HepG2 (cell line): ENCODE measurements at regions of chr10 and their contacts with region 1.

Region 1: DNA sequence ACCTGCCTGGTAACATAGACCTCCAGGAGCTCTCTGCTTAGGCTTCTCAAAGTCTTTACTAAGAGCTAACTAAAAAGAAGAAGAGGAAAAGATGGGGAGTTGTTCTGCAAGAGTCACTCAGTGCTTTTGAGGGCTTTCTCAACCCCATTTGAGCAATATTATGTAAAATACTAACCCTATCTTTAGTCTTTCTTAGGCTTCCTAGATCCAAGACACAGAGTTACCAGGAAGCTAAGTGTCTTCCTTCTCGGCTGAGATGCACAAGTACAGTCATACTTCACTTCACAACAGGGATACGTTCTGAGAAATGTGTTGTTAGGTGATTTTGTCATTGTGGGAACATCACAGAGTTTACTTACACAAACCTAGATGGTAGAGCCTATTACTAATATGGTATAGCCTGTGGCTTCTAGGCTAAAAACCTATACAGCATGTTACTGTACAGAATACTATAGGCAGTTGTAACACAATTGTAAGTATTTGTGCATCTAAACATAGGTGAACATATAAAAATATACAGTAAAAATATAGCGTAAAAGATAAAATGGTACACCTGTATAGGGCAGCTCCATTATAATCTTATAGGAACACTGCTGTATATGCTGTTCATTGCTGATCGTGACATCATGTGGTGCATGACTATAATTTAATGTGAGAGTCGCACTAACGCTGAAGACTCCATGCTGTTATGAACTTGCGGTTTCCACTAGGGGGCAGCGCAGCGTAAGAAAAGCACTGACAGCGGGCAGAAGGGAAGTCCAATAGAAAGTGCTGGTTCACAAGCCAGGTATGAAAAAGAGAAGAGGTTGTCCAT is 16.3 kb downstream of the ANKRD22 start:
- DNase-seq: peak; percentile 68
- ATAC-seq: peak; percentile 99
- H3K4me3 ChIP-seq: no peak overlapping the region
- H3K27ac ChIP-seq: no peak overlapping the region
- H3K4me1 ChIP-seq: no peaks in the 10 kb centered on the region
- H3K27me3 ChIP-seq: no peaks in the 10 kb centered on the region
- CTCF ChIP-seq: peak; percentile 90
- EP300 ChIP-seq: no peak
- POLR2A ChIP-seq: no peak
- RAD21 ChIP-seq: no peak; the same call in 1 of the 2 replicates

Region 2: DNA sequence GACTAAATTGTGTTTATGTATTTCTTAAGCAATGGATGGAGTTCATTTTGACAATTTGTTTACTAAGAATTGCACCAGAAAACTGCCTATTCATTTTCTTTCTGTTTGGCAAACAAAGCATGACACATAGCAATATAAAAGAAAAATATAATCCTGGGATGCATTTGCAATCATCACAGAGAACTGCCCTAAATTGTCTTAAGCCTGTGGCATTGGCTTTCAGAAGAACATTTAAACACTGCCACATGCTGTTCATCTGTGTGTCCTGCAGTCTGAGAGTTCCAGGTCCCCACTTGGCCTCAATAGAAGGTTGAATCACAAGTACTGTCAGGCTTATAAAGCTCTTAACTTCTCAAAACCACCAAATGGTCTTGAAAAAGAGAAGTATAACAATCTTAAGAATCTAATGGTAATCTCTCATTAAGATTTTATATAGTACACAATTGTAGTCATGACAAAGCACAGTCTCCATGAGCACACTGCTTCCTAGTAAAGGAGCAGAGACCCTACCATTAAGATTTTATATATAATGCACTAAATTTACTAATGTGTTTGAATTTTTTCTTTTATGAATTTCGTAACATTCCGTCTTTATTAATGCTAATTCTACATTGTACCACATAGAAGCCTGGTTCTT is 282.1 kb before region 1 on chr10:
- CTCF ChIA-PET with region 1: no interaction called
- POLR2A ChIA-PET with region 1: no interaction called
- in situ Hi-C with region 1: no loop called
- intact Hi-C with region 1: no loop called
- DNase-seq: peak; percentile 21
- ATAC-seq: peak; percentile 92
- H3K4me3 ChIP-seq: no peak overlapping the region
- H3K27ac ChIP-seq: no peak overlapping the region
- H3K4me1 ChIP-seq: no peaks in the 10 kb centered on the region
- H3K27me3 ChIP-seq: no peaks in the 10 kb centered on the region
- CTCF ChIP-seq: peak; percentile 75
- EP300 ChIP-seq: no peak
- POLR2A ChIP-seq: no peak
- RAD21 ChIP-seq: no peak

Region 3: GRCh38 chr10:88565072-88565471 is 270.2 kb before region 1 on chr10:
- CTCF ChIA-PET with region 1: no interaction called
- POLR2A ChIA-PET with region 1: no interaction called
- in situ Hi-C with region 1: no loop called
- intact Hi-C with region 1: no loop called
- DNase-seq: no peak
- ATAC-seq: 0 out of 3 replicates have a peak, but pooled peaks have one; percentile 51
- H3K4me3 ChIP-seq: no peak overlapping the region
- H3K27ac ChIP-seq: no peak overlapping the region
- H3K4me1 ChIP-seq: no peaks in the 10 kb centered on the region
- H3K27me3 ChIP-seq: no peaks in the 10 kb centered on the region; a peak in 1 of 5 replicates
- CTCF ChIP-seq: no peak
- EP300 ChIP-seq: no peak
- POLR2A ChIP-seq: no peak
- RAD21 ChIP-seq: no peak

Region 4: GRCh38 chr10:88791924-88792323 is 43.4 kb before region 1 on chr10:
- CTCF ChIA-PET with region 1: no interaction called
- POLR2A ChIA-PET with region 1: no interaction called
- in situ Hi-C with region 1: no loop called
- intact Hi-C with region 1: no loop called
- DNase-seq: peak; percentile 8
- ATAC-seq: peak; percentile 79
- H3K4me3 ChIP-seq: no peak overlapping the region
- H3K27ac ChIP-seq: no peak overlapping the region
- H3K4me1 ChIP-seq: no peaks in the 10 kb centered on the region
- H3K27me3 ChIP-seq: no peaks in the 10 kb centered on the region
- CTCF ChIP-seq: peak; percentile 45
- EP300 ChIP-seq: no peak
- POLR2A ChIP-seq: no peak
- RAD21 ChIP-seq: no peak

Region 5: DNA sequence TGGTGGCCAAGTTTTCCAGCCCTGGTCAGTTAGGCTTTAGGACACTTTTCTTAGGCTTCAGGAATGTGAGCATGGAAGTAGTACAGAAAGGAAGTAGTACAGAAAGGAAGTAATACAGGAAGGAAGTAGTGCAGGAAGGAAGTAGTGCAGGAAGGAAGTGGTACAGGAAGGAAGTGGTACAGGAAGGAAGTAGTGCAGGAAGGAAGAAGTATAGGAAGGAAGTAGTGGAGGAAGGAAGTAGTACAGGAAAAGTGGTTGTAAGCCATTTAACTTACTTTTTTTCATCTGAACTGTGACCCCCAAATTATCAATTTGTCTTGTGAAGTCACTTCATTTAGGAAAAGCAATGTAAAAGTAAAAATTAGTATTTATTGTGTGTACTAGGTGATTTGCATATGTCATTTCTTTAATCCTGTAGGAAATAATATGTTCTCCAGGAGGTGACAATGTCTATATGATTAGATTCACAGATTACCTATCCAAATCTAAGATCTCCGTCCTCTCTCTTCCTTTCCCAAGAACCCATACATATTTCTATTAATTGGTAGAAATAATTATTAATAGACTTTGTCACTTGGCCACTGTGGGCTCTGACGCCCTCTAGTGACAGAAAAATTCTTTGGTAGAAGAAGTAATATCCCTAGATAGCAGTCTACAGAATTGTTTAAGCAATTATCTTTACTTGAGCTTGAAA is 151.4 kb after region 1 on chr10:
- CTCF ChIA-PET with region 1: no interaction called
- POLR2A ChIA-PET with region 1: no interaction called
- in situ Hi-C with region 1: no loop called
- intact Hi-C with region 1: loop called (anchors 2 kb)
- DNase-seq: peak; percentile 19
- ATAC-seq: no peak
- H3K4me3 ChIP-seq: no peak overlapping the region
- H3K27ac ChIP-seq: no peak overlapping the region
- H3K4me1 ChIP-seq: peaks cover 30% of the 10 kb centered on the region
- H3K27me3 ChIP-seq: no peaks in the 10 kb centered on the region; a peak in 1 of 5 replicates
- CTCF ChIP-seq: peak; percentile 43
- EP300 ChIP-seq: no peak
- POLR2A ChIP-seq: no peak
- RAD21 ChIP-seq: no peak